Lower leg skin (tissue), 4 donors: ENCODE measurements at regions of chr2 and their contacts with region 1.

Region 1: DNA sequence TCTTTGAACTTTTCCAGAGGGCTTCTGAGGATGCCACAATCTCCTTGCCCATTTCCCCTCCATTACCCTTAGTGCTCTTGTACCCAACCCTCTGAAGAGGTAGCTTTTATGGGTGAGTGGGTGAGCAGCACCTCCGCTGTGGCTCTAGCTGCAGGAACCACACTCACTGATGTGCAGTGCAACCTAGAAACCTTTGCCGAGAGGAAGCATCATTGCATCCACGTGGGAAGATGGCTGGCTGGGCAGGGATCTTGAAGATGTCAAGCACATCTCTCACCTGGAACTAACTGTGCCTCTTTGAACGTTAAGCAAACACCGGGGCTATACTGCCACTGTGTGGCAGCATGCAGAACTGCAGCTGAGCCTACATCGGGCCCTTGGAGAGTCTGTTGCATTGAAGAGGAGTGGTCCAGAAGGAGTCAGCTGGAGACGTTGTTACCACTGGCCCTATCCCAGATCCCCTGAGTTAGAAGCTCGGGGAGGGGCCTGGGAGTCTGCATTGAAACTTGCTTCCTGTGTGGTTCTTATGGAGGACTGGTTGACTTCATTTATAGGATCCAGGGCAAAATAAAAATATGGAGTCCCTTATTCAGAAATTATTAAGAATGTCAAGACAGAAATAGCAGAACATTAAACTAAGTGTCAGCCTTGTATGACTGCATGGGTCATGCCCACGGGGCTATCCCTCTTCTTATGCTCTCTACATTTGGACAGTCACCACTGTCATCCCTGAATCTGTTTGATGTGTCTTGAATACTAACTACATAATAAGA is 28.7 kb downstream of the IGFBP5 start:
- DNase-seq: peak; percentile 78 to 94
- H3K4me3 ChIP-seq: no peak overlapping the region
- CTCF ChIP-seq: peak in 2 of 3 donors; percentile 33 to 75
- POLR2A ChIP-seq: no peak

Region 2: GRCh38 chr2:216519154-216519762 is 147.4 kb before region 1 on chr2:
- intact Hi-C with region 1: loop called (anchors 2 kb)
- DNase-seq: peak; percentile 80 to 87
- H3K4me3 ChIP-seq: no peak overlapping the region
- CTCF ChIP-seq: peak in 1 of 3 donors; percentile 67
- POLR2A ChIP-seq: no peak